Gastrocnemius medialis (tissue), 4 donors: ENCODE measurements at regions of chr5 and their contacts with region 1.

Region 1: GRCh38 chr5:82312373-82312856 is 34.3 kb upstream of the RPS23 start:
- DNase-seq: peak; percentile 22 to 35
- ATAC-seq: peak; percentile 77 to 83
- H3K4me3 ChIP-seq: no peak overlapping the region
- H3K27ac ChIP-seq: no peak overlapping the region
- H3K4me1 ChIP-seq: no peaks in the 10 kb centered on the region
- H3K27me3 ChIP-seq: no peaks in the 10 kb centered on the region
- CTCF ChIP-seq: peak; percentile 50 to 83 (median 70)
- POLR2A ChIP-seq: no peak

Region 2: GRCh38 chr5:82793808-82794419 is 481.5 kb after region 1 on chr5:
- in situ Hi-C with region 1: no loop called
- intact Hi-C with region 1: loop called (anchors 5 kb)
- DNase-seq: no peak
- ATAC-seq: no peak
- H3K4me3 ChIP-seq: no peak overlapping the region
- H3K27ac ChIP-seq: no peak overlapping the region
- H3K4me1 ChIP-seq: peaks cover 0 to 3% of the 10 kb centered on the region in 2 donors
- H3K27me3 ChIP-seq: no peaks in the 10 kb centered on the region
- CTCF ChIP-seq: peak; percentile 32 to 60 (median 39)
- POLR2A ChIP-seq: no peak

Region 3: DNA sequence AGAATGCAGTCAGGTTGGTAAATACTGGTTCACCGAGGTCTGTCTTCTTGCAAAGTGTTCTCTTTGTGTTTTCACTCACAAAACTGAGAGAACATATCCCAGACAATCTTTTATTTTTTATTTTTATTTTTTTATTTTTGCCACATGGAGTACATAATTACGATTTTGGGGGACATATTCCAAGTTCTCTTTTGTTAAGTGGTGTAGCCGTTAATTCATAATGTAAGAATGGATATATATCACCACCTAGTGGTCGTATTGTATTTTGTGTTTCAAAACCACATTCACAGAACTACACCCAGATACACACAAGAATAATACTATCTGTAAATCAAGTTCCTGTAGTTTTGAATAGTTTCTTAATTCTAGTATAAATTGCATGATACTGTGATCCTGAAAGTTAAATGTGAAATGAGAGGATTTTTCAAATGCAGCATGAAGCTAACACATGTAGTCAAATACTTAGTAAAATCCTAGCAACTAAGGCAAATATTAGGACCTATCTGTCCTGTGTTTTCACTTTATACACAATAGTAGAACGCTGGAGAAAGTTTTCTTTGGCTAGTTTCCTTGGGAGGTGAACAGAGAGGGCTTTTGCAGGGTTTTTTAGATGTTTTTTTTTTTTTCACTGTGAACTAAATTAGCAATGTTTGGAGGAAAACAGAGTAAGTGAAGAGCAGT is 1251.8 kb after region 1 on chr5:
- in situ Hi-C with region 1: no loop called
- intact Hi-C with region 1: loop called (anchors 5 kb)
- DNase-seq: no peak
- ATAC-seq: peak; percentile 43 to 44
- H3K4me3 ChIP-seq: no peak overlapping the region
- H3K27ac ChIP-seq: no peak overlapping the region
- H3K4me1 ChIP-seq: no peaks in the 10 kb centered on the region
- H3K27me3 ChIP-seq: no peaks in the 10 kb centered on the region
- CTCF ChIP-seq: peak in 4 of 5 experiments; percentile 42 to 68 (median 54)
- POLR2A ChIP-seq: no peak